Ascending aorta (tissue), 2 donors: ENCODE measurements at regions of chr11 and their contacts with region 1.

Region 1: DNA sequence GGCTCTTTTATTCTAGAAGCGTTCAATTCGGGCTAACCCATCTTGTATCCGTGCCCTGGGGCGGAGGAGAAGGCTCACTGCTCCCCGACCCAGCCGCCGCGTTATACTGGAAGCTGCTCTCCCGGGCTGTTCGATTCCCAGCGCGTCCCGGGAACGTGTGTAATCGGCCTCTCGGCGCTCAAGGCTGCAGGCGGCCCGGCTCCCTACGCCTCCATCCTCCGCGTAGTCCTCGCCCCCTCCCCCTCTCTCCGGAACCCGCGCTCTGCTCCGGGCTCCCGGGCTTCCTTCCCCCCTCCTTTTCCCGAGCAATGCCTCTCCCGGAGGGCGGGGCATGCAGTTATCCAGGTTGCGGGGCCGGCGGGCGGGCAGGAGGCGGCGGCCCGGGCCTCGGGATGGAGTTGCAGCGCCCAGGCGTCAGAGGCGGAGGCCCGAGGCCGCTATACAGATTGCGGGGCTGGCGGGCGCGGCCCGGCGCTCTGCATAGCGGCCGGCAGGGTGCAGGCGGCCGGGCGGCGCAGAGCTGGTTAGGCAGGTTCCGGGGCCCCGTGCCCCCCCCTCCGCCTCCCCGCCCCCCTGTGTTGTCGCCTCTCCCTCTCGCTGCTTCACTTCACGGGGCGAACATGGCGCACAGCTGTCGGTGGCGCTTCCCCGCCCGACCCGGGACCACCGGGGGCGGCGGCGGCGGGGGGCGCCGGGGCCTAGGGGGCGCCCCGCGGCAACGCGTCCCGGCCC is at the start of gene KMT2A:
- DNase-seq: peak; percentile 86 to 98
- H3K4me3 ChIP-seq: peak within 1 kb of the TSS; percentile 73 to 91
- H3K27ac ChIP-seq: peak within 1 kb of the TSS; percentile 95 to 96
- H3K4me1 ChIP-seq: peaks cover 3 to 18% of the 10 kb centered on the region in 2 donors
- H3K27me3 ChIP-seq: no peaks in the 10 kb centered on the region
- CTCF ChIP-seq: peak in 1 of 3 experiments; percentile 99
- total RNA-seq, gene KMT2A: 61.3 TPM

Region 2: GRCh38 chr11:118359295-118359958 is 76.6 kb before region 1 on chr11 and contains the start of gene UBE4A:
- intact Hi-C with region 1: loop called (anchors 1 kb)
- DNase-seq: peak; percentile 75 to 96
- H3K4me3 ChIP-seq: peak within 1 kb of the TSS; percentile 74 to 82
- H3K27ac ChIP-seq: peak within 1 kb of the TSS; percentile 40 to 44
- H3K4me1 ChIP-seq: peaks cover 0 to 8% of the 10 kb centered on the region in 2 donors
- H3K27me3 ChIP-seq: no peaks in the 10 kb centered on the region
- CTCF ChIP-seq: no peak
- total RNA-seq, gene UBE4A: 24.6 TPM

Region 3: GRCh38 chr11:118565051-118565450 is 129.0 kb after region 1 on chr11:
- intact Hi-C with region 1: loop called (anchors 2 kb)
- DNase-seq: peak in 1 of 2 donors; percentile 72
- H3K4me3 ChIP-seq: peak overlapping the region; percentile 53 to 75
- H3K27ac ChIP-seq: peak overlapping the region; percentile 75 to 88
- H3K4me1 ChIP-seq: peaks cover 0 to 5% of the 10 kb centered on the region in 2 donors
- H3K27me3 ChIP-seq: no peaks in the 10 kb centered on the region
- CTCF ChIP-seq: no peak

Region 4: GRCh38 chr11:118744046-118744445 is 308.0 kb after region 1 on chr11:
- intact Hi-C with region 1: no loop called
- DNase-seq: no peak
- H3K4me3 ChIP-seq: no peak overlapping the region
- H3K27ac ChIP-seq: no peak overlapping the region
- H3K4me1 ChIP-seq: peaks cover 0 to 11% of the 10 kb centered on the region in 2 donors
- H3K27me3 ChIP-seq: no peaks in the 10 kb centered on the region
- CTCF ChIP-seq: no peak

Region 5: GRCh38 chr11:119101759-119102423 is 665.8 kb after region 1 on chr11 and contains the start of gene DPAGT1:
- intact Hi-C with region 1: loop called (anchors 10 kb)
- DNase-seq: peak; percentile 70 to 97
- H3K4me3 ChIP-seq: peak within 1 kb of the TSS; percentile 75 to 89
- H3K27ac ChIP-seq: peak within 1 kb of the TSS; percentile 92
- H3K4me1 ChIP-seq: peaks cover 20 to 25% of the 10 kb centered on the region in 2 donors
- H3K27me3 ChIP-seq: no peaks in the 10 kb centered on the region
- CTCF ChIP-seq: no peak
- total RNA-seq, gene DPAGT1: 61.9 TPM

Region 6: GRCh38 chr11:120432056-120433018 is 1996.3 kb after region 1 on chr11:
- intact Hi-C with region 1: loop called (anchors 5 kb)
- DNase-seq: peak; percentile 12 to 85
- H3K4me3 ChIP-seq: peak overlapping the region in 1 of 2 donors; percentile 2
- H3K27ac ChIP-seq: peak overlapping the region; percentile 78 to 89
- H3K4me1 ChIP-seq: peaks cover 0 to 9% of the 10 kb centered on the region in 2 donors
- H3K27me3 ChIP-seq: no peaks in the 10 kb centered on the region
- CTCF ChIP-seq: no peak